Sciatic nerve (tissue), 2 donors: ENCODE measurements at regions of chr14 and their contacts with region 1.

Region 1: DNA sequence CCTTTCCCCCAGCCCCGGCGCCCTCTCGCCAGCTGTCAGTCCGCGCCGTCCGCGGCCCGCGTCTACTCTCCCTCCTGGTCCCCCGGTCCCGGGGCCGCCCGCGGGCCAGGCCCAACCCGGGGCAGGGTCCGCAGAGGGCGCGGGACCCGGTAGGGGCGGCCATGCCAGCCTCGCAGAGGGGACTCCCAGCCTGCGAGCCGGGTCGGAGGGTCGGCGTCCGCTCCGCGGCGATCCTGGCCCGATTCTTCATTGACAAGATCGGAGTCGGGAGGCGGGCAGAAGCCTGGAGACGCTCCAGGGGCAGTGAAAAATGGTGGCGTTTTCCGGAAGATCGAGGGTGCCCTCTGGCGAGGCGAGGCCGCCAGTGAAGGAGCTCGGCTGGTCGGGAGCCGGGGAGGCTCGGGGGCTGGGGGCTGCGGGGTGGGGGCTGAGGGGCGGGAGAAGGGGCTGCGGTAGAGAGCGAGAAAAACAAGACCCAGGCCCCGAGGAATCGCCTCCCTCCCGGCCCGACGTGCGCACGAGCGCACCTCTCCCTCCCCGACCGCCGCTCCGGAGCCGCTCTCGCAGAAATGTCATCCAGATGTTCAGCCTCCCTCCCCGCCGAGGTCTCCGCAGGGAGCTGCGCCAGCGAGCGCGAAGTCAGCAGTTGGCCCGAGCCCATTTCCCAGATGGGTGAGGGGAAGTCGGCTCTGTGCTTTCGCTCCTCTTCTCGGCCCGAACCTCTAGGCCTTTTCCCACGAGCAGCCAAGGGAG is 647 bp upstream of the TGFB3 start:
- DNase-seq: peak; percentile 93
- ATAC-seq: peak; percentile 62

Region 2: DNA sequence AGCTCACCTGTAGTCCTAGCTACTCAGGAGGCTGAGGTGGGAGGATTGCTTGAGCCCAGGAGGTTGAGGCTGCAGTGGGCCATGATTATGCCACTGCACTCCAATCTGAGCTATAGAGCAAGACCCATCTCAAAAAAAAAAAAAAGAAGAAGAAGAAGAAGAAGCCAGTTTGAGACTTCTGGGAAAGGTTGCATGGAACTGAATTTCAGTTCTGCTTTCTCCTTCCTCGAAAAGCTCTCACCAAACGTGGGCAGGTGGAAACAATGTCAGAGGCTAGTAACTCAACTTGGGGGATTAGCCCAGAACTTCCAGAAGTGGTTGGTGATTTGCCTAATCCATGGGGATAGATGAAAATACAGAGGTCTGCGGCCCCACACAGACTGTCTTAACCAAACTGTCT is 385.3 kb before region 1 on chr14:
- intact Hi-C with region 1: loop called (anchors 10 kb)
- DNase-seq: no peak
- ATAC-seq: no peak

Region 3: DNA sequence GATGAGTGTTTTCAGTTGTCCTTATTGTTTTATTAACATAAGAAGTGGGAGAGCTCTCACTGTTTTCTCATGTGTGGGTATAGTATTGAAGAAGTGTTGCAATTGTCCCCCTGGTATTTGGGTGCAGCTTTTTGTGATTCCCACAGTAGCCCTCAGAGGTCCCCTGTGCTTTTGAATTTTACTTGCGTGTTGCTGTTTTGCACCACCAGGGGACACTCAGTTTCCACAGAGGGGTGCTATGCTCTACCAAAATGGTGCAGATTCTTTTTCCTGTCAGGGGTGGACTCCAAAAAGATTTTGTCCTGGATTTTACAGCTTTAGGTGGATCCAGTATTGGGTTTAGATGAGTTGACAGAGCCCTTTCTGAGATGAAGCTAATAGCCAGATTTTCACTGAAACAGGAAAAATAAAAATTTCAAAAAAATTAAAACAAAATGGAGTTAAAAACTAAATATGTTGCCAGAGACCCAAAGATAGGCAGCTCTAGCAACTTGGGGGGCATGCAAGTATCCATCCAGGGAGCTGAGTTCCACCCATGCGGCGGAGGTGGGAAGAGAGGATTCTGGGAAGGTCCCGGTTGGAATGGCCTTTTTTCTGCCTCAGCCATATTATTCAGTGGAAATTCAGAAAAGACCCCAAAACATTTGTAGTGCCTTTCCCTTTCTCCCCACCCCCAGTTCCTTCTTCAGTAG is 271.2 kb before region 1 on chr14:
- intact Hi-C with region 1: loop called (anchors 5 kb)
- DNase-seq: no peak
- ATAC-seq: no peak